ENCODE measurements at regions of chr2 and their contacts with region 1.

Region 1: DNA sequence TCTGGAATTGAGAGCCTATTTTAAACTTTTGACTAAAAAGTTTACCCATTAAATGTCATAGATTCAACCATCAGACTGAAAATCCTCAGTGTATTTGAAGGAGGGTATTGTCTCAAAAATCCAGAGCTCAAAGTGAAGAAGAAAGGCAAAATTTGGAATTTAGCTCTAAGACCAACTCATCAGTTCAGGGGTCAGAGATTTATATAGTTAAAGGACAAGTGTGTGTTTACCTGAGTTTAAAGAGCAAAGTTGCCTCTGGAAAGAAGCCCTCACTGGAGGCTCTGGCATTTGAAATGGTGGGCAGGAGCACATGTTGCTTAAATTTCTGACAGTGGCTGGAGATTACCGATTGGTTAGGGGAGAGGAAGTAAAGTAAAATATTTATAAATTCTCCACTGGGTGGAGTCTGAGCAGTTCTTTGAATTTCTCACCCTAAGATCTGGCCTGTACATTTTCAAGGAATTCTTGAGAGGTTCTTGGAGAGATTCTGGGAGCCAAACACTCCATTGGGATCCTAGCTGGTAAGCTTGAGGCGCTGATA is at the start of gene KYNU:
- DNase-seq: peak; percentile 82
- ATAC-seq: peak; percentile 90
- H3K4me3 ChIP-seq: peak within 1 kb of the TSS; percentile 58 to 77 (median 60); a peak in 5 of 6 replicates
- H3K27ac ChIP-seq: peak within 1 kb of the TSS; percentile 87
- H3K4me1 ChIP-seq: peaks cover 75% of the 10 kb centered on the region
- H3K27me3 ChIP-seq: no peaks in the 10 kb centered on the region
- CTCF ChIP-seq: peak; percentile 19; the same call in 1 of the 2 replicates
- EP300 ChIP-seq: peak in 1 of 2 experiments; percentile 76; a peak in 2 of 4 replicates
- POLR2A ChIP-seq: no peak; a peak in 1 of 4 replicates
- RAD21 ChIP-seq: no peak
- total RNA-seq, gene KYNU: 68.6 and 98.2 TPM in 2 replicates

Region 2: DNA sequence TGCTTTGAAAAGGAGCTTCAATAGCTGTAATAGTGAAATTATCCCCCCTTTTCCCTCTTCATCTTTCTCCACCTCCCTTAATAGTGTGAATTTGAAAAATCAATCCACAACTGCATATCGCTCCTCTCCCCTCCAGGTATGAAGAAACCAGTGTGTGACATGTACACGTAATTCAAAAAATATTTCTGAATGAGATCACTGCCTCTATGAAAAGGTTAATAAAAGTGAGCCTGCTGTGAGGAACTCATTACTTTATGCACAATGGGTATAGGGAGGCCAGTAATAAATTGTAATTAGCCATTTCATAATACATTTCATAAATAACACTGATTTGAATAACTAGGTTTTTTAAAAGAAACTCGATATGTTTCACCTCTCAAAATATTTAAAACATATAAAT is 208.9 kb before region 1 on chr2:
- CTCF ChIA-PET with region 1: no interaction called
- POLR2A ChIA-PET with region 1: no interaction called
- in situ Hi-C with region 1: no loop called
- intact Hi-C with region 1: no loop called
- DNase-seq: no peak
- ATAC-seq: no peak
- H3K4me3 ChIP-seq: no peak overlapping the region
- H3K27ac ChIP-seq: no peak overlapping the region
- H3K4me1 ChIP-seq: no peaks in the 10 kb centered on the region
- H3K27me3 ChIP-seq: no peaks in the 10 kb centered on the region
- CTCF ChIP-seq: no peak
- EP300 ChIP-seq: no peak
- POLR2A ChIP-seq: no peak
- RAD21 ChIP-seq: no peak

Region 3: GRCh38 chr2:142813830-142814829 is 63.2 kb before region 1 on chr2:
- CTCF ChIA-PET with region 1: no interaction called
- POLR2A ChIA-PET with region 1: interaction called, 9 read pairs
- in situ Hi-C with region 1: no loop called
- intact Hi-C with region 1: loop called (anchors 2 kb)
- DNase-seq: peak; percentile 78
- ATAC-seq: peak; percentile 99
- H3K4me3 ChIP-seq: peak overlapping the region; percentile 19 to 28 (median 24); a peak in 3 of 6 replicates
- H3K27ac ChIP-seq: peak overlapping the region; percentile 58
- H3K4me1 ChIP-seq: peaks cover 42% of the 10 kb centered on the region
- H3K27me3 ChIP-seq: no peaks in the 10 kb centered on the region
- CTCF ChIP-seq: no peak
- EP300 ChIP-seq: peak in 1 of 2 experiments; percentile 92; a peak in 2 of 4 replicates
- POLR2A ChIP-seq: no peak
- RAD21 ChIP-seq: no peak

Region 4: DNA sequence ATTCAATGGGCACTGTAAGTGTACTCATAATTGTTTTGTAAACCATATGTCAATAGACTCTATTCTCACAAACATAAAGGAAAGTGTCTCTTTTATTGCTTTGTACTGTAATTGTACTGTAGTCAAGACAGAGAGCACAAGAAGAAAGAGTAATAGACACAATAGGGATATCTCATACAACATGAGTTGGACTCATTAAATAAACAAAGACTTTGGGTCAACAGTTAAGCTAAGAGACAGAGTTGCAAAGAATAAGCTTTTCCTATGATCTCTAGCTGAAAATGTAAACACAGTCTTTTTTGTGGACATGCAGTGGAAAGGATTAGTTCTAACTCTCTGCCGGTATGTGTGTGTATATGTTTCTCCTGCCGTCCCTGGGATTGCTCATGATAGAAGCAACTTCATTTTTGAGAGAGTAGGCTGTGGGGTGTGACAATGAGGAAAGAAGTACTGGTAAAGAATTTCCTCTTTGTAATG is 13.8 kb before region 1 on chr2:
- CTCF ChIA-PET with region 1: no interaction called
- POLR2A ChIA-PET with region 1: interaction called, 21 read pairs
- in situ Hi-C with region 1: no loop called
- intact Hi-C with region 1: loop called (anchors 1 kb)
- DNase-seq: peak; percentile 98
- ATAC-seq: peak; percentile 99
- H3K4me3 ChIP-seq: peak overlapping the region in 1 of 3 experiments; percentile 17; a peak in 1 of 6 replicates
- H3K27ac ChIP-seq: peak overlapping the region; percentile 58
- H3K4me1 ChIP-seq: peaks cover 52% of the 10 kb centered on the region
- H3K27me3 ChIP-seq: no peaks in the 10 kb centered on the region
- CTCF ChIP-seq: no peak
- EP300 ChIP-seq: peak; percentile 39 to 96; a peak in 3 of 4 replicates
- POLR2A ChIP-seq: no peak
- RAD21 ChIP-seq: no peak

Region 5: DNA sequence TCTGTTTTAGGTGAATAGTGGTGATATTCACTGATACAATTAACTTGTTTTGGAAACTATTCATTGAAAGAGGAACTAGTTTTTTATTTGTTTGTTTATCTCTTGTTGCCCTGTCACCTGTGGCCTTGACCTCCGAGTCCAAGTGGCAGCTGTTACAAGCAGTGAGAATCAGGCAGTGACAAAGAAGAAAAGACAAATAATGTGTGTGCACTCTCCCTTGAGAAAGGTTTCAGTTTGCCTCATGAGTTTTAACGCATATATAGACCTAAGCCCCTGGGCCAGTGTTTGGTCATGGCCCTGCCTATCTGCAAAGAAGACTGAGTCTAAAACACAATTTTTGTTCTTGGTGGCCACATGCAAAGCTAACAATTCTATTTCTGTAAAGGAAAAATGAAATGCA is 15.4 kb after region 1 on chr2:
- CTCF ChIA-PET with region 1: no interaction called
- POLR2A ChIA-PET with region 1: interaction called, 10 read pairs
- in situ Hi-C with region 1: no loop called
- intact Hi-C with region 1: no loop called
- DNase-seq: peak; percentile 47
- ATAC-seq: peak; percentile 86
- H3K4me3 ChIP-seq: no peak overlapping the region
- H3K27ac ChIP-seq: peak overlapping the region; percentile 16
- H3K4me1 ChIP-seq: peaks cover 17% of the 10 kb centered on the region
- H3K27me3 ChIP-seq: no peaks in the 10 kb centered on the region
- CTCF ChIP-seq: no peak
- EP300 ChIP-seq: peak in 1 of 2 experiments; percentile 69; a peak in 1 of 4 replicates
- POLR2A ChIP-seq: no peak
- RAD21 ChIP-seq: no peak

Region 6: GRCh38 chr2:142951190-142952007 is 74.1 kb after region 1 on chr2:
- CTCF ChIA-PET with region 1: no interaction called
- POLR2A ChIA-PET with region 1: interaction called, 17 read pairs
- in situ Hi-C with region 1: no loop called
- intact Hi-C with region 1: loop called (anchors 1 kb)
- DNase-seq: peak; percentile 93
- ATAC-seq: peak; percentile 92
- H3K4me3 ChIP-seq: peak overlapping the region in 1 of 3 experiments; percentile 34; a peak in 1 of 6 replicates
- H3K27ac ChIP-seq: peak overlapping the region; percentile 85
- H3K4me1 ChIP-seq: peaks cover 43% of the 10 kb centered on the region
- H3K27me3 ChIP-seq: no peaks in the 10 kb centered on the region
- CTCF ChIP-seq: no peak
- EP300 ChIP-seq: peak in 1 of 2 experiments; percentile 96; a peak in 2 of 4 replicates
- POLR2A ChIP-seq: no peak
- RAD21 ChIP-seq: no peak

Region 7: GRCh38 chr2:142980561-142981378 is 103.5 kb after region 1 on chr2:
- CTCF ChIA-PET with region 1: interaction called, 3 read pairs
- POLR2A ChIA-PET with region 1: interaction called, 4 read pairs
- in situ Hi-C with region 1: no loop called
- intact Hi-C with region 1: loop called (anchors 2 kb)
- DNase-seq: peak; percentile 49
- ATAC-seq: peak; percentile 59
- H3K4me3 ChIP-seq: no peak overlapping the region
- H3K27ac ChIP-seq: no peak overlapping the region
- H3K4me1 ChIP-seq: peaks cover 32% of the 10 kb centered on the region
- H3K27me3 ChIP-seq: no peaks in the 10 kb centered on the region
- CTCF ChIP-seq: peak; percentile 64
- EP300 ChIP-seq: no peak
- POLR2A ChIP-seq: no peak
- RAD21 ChIP-seq: peak; percentile 62

Measured in HepG2 (cell line).